AG04449 (cell line): ENCODE measurements at regions of chr1 and their contacts with region 1.

Region 1: DNA sequence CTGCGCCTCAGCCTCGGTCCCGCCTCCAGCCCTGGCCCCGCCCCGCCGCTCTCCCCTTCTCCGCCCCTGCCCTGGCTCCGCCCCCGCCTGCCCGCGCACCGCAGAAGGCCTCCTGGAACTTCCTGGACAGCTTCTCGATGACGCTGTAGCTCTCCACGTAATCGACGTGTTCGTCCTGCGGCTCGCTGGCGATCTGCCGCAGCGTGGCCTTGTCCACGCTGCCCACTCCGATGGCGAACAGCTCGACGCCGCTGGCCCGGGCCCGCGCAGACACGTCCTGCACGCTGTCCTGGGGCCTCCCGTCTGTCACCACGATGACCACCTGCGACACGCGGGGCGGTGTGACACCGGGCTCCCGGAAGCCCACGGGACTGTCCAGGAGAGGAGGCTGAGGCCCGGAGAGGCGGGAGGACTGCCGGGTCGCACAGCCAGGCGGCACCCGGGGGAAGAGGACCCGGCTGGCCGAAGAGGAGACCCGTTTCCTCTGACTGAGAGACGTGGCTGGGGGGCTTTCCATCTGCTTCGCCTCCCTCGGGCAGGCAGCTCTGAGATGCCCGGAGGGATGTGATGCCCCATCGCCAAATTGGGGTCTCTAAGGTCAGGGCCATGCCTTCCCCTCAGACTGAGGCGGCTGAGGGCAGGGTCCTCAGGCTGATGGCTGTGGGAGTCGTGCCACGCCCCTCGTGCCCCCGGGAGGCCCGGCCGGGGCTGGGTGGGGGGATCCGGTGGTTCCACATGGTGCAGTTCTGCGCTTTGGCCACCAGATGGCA is 4.6 kb downstream of the MATN1 start:
- DNase-seq: peak; percentile 86
- H3K4me3 ChIP-seq: peak overlapping the region; percentile 69
- CTCF ChIP-seq: peak; percentile 86

Region 2: GRCh38 chr1:30732277-30732996 is 13.6 kb after region 1 on chr1:
- CTCF ChIA-PET with region 1: interaction called, 90 read pairs
- POLR2A ChIA-PET with region 1: interaction called, 4 read pairs
- DNase-seq: no peak
- H3K4me3 ChIP-seq: no peak overlapping the region
- CTCF ChIP-seq: no peak

Region 3: GRCh38 chr1:30763651-30764248 is 44.9 kb after region 1 on chr1:
- CTCF ChIA-PET with region 1: interaction called, 56 read pairs
- POLR2A ChIA-PET with region 1: no interaction called
- DNase-seq: no peak
- H3K4me3 ChIP-seq: no peak overlapping the region
- CTCF ChIP-seq: no peak

Region 4: GRCh38 chr1:30790850-30791778 is 72.3 kb after region 1 on chr1:
- CTCF ChIA-PET with region 1: interaction called, 943 read pairs
- POLR2A ChIA-PET with region 1: no interaction called
- DNase-seq: no peak
- H3K4me3 ChIP-seq: no peak overlapping the region
- CTCF ChIP-seq: no peak

Region 5: DNA sequence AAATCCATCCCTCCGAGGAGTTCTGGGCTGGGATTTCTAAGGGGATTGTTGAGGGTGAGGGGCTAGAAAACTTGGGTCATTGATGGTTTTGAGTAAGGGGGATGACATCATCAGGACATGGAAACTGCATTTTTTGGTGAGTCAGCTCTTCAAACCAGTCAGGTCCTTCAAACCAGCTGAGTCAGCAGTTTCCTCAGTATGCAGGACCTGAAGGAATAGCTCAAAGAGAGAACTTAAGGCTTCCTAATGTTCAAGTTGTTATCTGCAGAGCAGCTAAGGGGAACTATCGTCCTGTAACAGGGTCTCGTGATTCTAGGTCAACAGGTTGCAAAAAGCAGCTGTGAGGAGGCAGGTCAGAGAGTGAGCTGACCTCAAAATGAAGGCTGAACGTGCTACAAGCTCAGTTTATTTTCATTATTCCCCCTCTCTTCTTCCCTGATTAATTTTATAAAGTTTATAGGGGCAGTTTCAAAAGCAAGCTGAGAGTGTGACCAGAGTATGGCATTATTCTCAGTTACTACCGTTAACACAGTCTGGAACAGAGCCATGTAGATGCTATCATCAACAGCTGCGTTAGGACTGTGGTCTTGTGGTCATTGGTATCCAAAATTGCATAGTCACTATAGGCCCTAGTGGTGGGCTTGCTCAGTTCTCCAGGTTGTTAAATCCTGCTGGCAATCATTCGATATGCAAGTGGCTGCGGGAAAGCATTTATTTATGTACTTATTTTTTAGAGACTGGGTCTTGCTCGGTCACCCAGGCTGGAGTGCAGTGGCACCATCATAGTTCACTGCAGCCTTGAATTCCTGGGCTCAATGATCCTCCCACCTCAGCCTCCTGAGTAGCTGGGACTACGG is 200.4 kb after region 1 on chr1:
- CTCF ChIA-PET with region 1: interaction called, 110 read pairs
- POLR2A ChIA-PET with region 1: no interaction called
- DNase-seq: no peak
- H3K4me3 ChIP-seq: no peak overlapping the region
- CTCF ChIP-seq: no peak